CD4-positive, alpha-beta T cell (primary cell): ENCODE measurements at regions of chr11 and their contacts with region 1.

Region 1: GRCh38 chr11:65506770-65507505 is 8.1 kb downstream of the MALAT1 start:
- DNase-seq: peak in 10 of 14 experiments; percentile 34 to 70 (median 47)
- ATAC-seq: peak; percentile 31
- H3K4me3 ChIP-seq: peak overlapping the region; percentile 73
- H3K4me3 Mint-ChIP-seq: no peak overlapping the region
- H3K27ac ChIP-seq: peak overlapping the region; percentile 46
- H3K27ac Mint-ChIP-seq: no peak overlapping the region
- H3K4me1 ChIP-seq: peaks cover 56% of the 10 kb centered on the region
- H3K4me1 Mint-ChIP-seq: peaks cover 57% of the 10 kb centered on the region
- H3K27me3 ChIP-seq: no peaks in the 10 kb centered on the region
- H3K27me3 Mint-ChIP-seq: no peaks in the 10 kb centered on the region
- CTCF ChIP-seq: no peak

Region 2: GRCh38 chr11:65204646-65205601 is 302.0 kb before region 1 on chr11:
- CTCF ChIA-PET with region 1: no interaction called
- POLR2A ChIA-PET with region 1: no interaction called
- intact Hi-C with region 1: loop called in 1 of 2 experiments (anchors 2 kb)
- DNase-seq: peak in 13 of 14 experiments; percentile 20 to 74 (median 39)
- ATAC-seq: peak; percentile 76
- H3K4me3 ChIP-seq: no peak overlapping the region
- H3K4me3 Mint-ChIP-seq: no peak overlapping the region
- H3K27ac ChIP-seq: no peak overlapping the region
- H3K27ac Mint-ChIP-seq: no peak overlapping the region
- H3K4me1 ChIP-seq: no peaks in the 10 kb centered on the region
- H3K4me1 Mint-ChIP-seq: no peaks in the 10 kb centered on the region
- H3K27me3 ChIP-seq: no peaks in the 10 kb centered on the region
- H3K27me3 Mint-ChIP-seq: no peaks in the 10 kb centered on the region
- CTCF ChIP-seq: peak; percentile 91

Region 3: GRCh38 chr11:65274735-65275682 is 231.9 kb before region 1 on chr11:
- CTCF ChIA-PET with region 1: no interaction called
- POLR2A ChIA-PET with region 1: interaction called, 3 read pairs
- intact Hi-C with region 1: loop called in 1 of 2 experiments (anchors 1 kb)
- DNase-seq: peak in 7 of 14 experiments; percentile 7 to 67 (median 46)
- ATAC-seq: no peak
- H3K4me3 ChIP-seq: no peak overlapping the region
- H3K4me3 Mint-ChIP-seq: no peak overlapping the region
- H3K27ac ChIP-seq: no peak overlapping the region
- H3K27ac Mint-ChIP-seq: no peak overlapping the region
- H3K4me1 ChIP-seq: no peaks in the 10 kb centered on the region
- H3K4me1 Mint-ChIP-seq: peaks cover 8% of the 10 kb centered on the region
- H3K27me3 ChIP-seq: no peaks in the 10 kb centered on the region
- H3K27me3 Mint-ChIP-seq: no peaks in the 10 kb centered on the region
- CTCF ChIP-seq: peak; percentile 57

Region 4: DNA sequence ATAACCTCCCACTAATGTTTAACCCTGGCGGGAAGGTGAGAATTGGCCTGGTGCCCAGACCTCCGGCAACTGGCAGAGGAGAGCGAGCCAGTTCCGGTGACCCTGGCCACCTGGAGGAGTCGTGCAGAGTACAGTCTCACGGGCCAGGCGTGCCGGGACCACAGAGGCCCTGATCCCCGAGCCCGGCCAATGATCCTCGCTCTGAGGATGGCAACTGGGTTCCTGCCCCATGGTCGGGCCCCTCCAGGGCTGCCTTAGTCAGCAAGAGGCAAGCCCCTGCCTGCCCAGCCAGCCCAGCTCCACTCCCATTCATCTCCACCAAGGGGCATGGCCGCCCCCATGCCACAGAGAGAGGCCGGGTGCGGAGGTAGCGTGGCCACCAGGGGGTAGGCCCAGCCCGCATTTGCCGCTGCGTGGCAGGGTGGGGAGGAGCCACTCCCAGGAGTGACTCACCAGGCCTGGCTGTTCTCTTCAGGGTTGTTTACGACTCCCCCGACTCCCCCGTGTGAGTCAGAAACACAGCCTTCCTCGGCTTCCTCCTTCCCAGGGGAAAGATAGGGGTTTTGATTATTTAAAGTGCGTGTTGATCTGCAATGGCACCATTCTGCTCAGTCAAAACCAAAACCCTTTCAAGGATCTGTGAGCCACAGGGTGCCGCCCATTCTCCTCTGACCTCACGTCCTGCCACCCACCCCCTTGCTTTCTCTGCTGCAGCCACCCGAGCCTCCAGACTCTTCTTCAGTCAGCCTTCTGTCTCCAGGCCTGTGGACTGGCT is 124.7 kb before region 1 on chr11 and contains the start of gene SLC25A45:
- CTCF ChIA-PET with region 1: interaction called, 19 read pairs
- POLR2A ChIA-PET with region 1: interaction called, 350 read pairs
- intact Hi-C with region 1: loop called (anchors 1 kb)
- DNase-seq: peak; percentile 84 to 96 (median 92)
- ATAC-seq: peak; percentile 83
- H3K4me3 ChIP-seq: peak within 1 kb of the TSS; percentile 76
- H3K4me3 Mint-ChIP-seq: peak within 1 kb of the TSS; percentile 86
- H3K27ac ChIP-seq: peak within 1 kb of the TSS; percentile 94 to 95
- H3K27ac Mint-ChIP-seq: peak within 1 kb of the TSS; percentile 98
- H3K4me1 ChIP-seq: peaks cover 74% of the 10 kb centered on the region
- H3K4me1 Mint-ChIP-seq: peaks cover 57% of the 10 kb centered on the region
- H3K27me3 ChIP-seq: no peaks in the 10 kb centered on the region
- H3K27me3 Mint-ChIP-seq: no peaks in the 10 kb centered on the region
- CTCF ChIP-seq: peak; percentile 81
- total RNA-seq, gene SLC25A45: 40.0 to 40.8 TPM

Region 5: DNA sequence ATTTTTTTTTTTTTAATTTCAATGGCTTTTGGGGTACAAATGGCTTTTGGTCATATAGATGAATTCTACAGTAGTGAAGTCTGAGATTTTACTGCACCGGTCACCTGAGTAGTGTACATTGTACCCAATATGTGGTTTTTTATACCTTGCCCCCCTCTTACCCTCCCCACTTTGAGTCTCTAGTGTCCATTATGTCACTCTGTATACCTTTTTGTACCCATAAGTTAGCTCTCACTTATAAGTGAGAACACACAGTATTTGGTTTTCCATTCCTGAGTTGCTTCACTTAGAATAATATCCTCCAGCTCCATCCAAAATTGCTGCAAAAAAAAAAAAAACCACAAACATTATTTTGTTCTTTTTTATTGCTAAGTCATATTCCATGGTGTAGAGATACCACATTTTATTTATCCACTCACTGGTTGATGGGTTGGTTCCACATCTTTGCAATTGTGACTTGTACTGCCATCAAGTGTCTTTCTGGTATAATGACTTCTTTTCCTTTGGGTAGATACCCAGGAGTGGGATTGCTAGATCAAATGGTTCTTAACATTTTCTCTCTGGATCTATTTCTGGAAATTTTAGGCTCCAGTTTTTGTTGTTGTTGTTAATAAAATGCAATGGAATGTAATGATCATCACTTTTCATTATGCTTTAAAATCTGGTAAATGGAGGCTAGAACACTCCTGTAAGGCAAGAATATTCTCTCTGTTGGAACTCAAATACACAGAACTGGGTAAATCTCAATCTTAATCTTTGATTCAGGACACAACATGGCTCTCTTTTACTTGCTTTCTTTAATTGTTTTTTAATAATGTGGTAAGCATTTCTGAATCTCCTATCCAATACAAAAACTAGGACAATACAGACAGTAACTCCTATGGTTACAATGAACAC is 74.0 kb before region 1 on chr11:
- CTCF ChIA-PET with region 1: interaction called, 6 read pairs
- POLR2A ChIA-PET with region 1: interaction called, 3,042 read pairs
- intact Hi-C with region 1: no loop called
- DNase-seq: peak in 3 of 14 experiments; percentile 75 to 78 (median 77)
- ATAC-seq: peak; percentile 45
- H3K4me3 ChIP-seq: no peak overlapping the region
- H3K4me3 Mint-ChIP-seq: peak overlapping the region; percentile 74
- H3K27ac ChIP-seq: peak overlapping the region in 1 of 2 donors; percentile 37
- H3K27ac Mint-ChIP-seq: peak overlapping the region; percentile 89
- H3K4me1 ChIP-seq: peaks cover 48% of the 10 kb centered on the region
- H3K4me1 Mint-ChIP-seq: peaks cover 90% of the 10 kb centered on the region
- H3K27me3 ChIP-seq: no peaks in the 10 kb centered on the region
- H3K27me3 Mint-ChIP-seq: no peaks in the 10 kb centered on the region
- CTCF ChIP-seq: peak; percentile 74

Region 6: DNA sequence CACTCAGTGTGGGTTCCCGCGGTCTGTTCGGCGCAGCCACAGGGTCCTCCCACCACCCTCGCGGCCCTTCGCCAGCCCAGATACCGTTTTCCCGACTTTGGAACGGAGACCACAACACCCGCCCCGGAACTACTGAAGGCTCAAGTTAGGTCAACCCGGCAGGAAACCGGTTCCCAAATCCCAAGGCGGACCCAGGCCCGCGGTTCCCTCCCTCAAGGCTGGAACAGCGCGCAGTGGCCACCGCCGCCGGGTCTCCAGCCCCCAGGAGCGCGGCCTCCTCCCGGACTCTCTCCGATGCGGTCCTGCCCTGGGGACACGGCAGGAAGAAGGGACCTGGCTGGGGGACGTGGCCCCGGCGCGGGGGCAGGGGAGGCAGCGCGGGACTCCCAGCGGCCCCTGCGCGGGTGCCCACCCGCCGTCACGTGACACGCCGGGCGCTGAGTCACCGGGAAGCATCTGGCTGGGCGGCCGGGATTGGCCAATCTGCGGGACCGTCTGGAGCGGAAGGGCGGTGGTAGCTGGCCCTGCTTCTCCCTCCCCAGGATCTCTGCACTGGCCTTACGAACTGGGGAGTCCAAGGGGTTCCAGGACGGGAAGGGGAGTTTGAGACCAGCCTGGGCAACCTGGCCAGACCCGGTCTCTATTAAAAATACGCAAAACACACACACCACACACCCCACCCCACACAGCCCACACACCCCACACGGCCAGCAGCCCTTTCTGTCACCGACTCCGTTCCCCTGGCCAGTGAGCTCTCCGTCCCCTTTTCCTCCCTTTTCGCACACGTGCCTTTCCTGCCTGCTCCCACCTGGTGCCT is 29.6 kb before region 1 on chr11:
- CTCF ChIA-PET with region 1: interaction called, 15 read pairs
- POLR2A ChIA-PET with region 1: interaction called, 968 read pairs
- intact Hi-C with region 1: loop called (anchors 2 to 5 kb)
- DNase-seq: peak; percentile 69 to 94 (median 88)
- ATAC-seq: peak; percentile 84
- H3K4me3 ChIP-seq: peak overlapping the region; percentile 80
- H3K4me3 Mint-ChIP-seq: peak overlapping the region; percentile 100
- H3K27ac ChIP-seq: peak overlapping the region; percentile 94 to 99
- H3K27ac Mint-ChIP-seq: peak overlapping the region; percentile 99
- H3K4me1 ChIP-seq: peaks cover 34% of the 10 kb centered on the region
- H3K4me1 Mint-ChIP-seq: peaks cover 15% of the 10 kb centered on the region
- H3K27me3 ChIP-seq: no peaks in the 10 kb centered on the region
- H3K27me3 Mint-ChIP-seq: no peaks in the 10 kb centered on the region
- CTCF ChIP-seq: no peak

Region 7: DNA sequence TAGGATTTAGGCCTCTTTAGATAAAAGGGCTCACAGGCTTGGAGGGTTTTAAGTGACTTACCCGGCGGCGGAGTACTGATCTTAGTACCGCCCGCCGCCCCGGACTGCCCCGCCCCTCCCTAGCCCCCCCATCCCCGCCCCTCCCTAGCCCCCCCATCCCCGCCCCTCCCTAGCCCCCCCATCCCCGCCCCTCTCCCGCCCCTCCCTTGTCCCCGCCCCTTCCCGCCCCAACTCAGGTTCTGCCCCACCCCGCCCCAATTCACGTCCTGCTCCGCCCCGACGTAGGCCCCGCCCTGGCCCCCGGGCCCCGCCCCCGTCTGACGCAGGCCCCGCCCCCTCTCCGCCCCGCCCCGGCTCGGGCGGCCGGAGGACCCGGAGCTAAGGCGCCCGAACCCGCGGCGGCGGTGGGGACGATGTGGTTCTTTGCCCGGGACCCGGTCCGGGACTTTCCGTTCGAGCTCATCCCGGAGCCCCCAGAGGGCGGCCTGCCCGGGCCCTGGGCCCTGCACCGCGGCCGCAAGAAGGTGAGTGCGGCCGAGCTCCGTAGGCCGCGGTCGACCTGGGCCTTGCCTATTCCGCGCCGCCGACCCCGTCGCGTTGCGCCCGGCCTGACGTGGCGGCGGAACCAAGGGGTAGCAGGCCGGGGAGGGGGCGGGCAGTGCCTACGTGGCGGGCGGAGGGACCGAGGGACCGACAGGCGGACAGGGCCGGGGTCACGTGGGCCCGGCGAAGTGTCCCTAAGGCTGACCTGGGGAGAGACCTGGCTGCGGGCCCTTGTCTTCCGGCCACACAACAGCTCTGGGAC is 18.0 kb after region 1 on chr11 and contains the start of gene SCYL1:
- CTCF ChIA-PET with region 1: interaction called, 3 read pairs
- POLR2A ChIA-PET with region 1: interaction called, 106 read pairs
- intact Hi-C with region 1: loop called in 1 of 2 experiments (anchors 2 kb)
- DNase-seq: peak; percentile 72 to 91 (median 81)
- ATAC-seq: peak; percentile 79
- H3K4me3 ChIP-seq: peak within 1 kb of the TSS; percentile 75
- H3K4me3 Mint-ChIP-seq: peak within 1 kb of the TSS; percentile 88
- H3K27ac ChIP-seq: peak within 1 kb of the TSS; percentile 60 to 84
- H3K27ac Mint-ChIP-seq: peak within 1 kb of the TSS; percentile 91
- H3K4me1 ChIP-seq: peaks cover 65% of the 10 kb centered on the region
- H3K4me1 Mint-ChIP-seq: peaks cover 58% of the 10 kb centered on the region
- H3K27me3 ChIP-seq: no peaks in the 10 kb centered on the region
- H3K27me3 Mint-ChIP-seq: no peaks in the 10 kb centered on the region
- CTCF ChIP-seq: no peak
- total RNA-seq, gene SCYL1: 57.4 to 60.7 TPM